Ascending aorta (tissue), 2 donors: ENCODE measurements at regions of chr17 and their contacts with region 1.

Region 1: DNA sequence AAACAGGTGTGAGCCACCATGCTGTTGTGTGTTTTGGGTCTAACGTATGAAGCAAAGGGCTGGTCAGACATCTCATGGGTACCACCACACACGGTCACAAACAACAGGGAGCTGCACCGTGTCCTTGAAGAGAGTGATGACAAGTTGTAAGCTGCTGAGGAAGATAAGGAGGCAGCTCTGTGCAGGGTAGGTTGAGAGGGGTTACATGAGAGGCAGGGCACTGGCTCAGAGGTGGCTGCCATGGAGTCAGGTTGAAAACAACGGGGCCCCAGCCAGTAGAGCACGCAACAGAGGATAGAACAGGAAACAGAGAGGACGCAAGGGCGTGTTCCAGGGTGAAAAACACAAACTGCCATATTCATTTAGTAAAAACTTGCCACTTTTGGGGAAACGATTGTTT is 52.2 kb downstream of the TRARG1 start:
- DNase-seq: no peak
- H3K4me3 ChIP-seq: no peak overlapping the region
- H3K27ac ChIP-seq: no peak overlapping the region
- H3K4me1 ChIP-seq: no peaks in the 10 kb centered on the region
- H3K27me3 ChIP-seq: no peaks in the 10 kb centered on the region
- CTCF ChIP-seq: no peak

Region 2: GRCh38 chr17:1229432-1229899 is 102.2 kb before region 1 on chr17:
- intact Hi-C with region 1: no loop called
- DNase-seq: peak; percentile 39 to 83
- H3K4me3 ChIP-seq: peak overlapping the region; percentile 72 to 88
- H3K27ac ChIP-seq: peak overlapping the region in 1 of 2 donors; percentile 39
- H3K4me1 ChIP-seq: peaks cover 4 to 7% of the 10 kb centered on the region in 2 donors
- H3K27me3 ChIP-seq: peaks cover 18% of the 10 kb centered on the region
- CTCF ChIP-seq: no peak

Region 3: DNA sequence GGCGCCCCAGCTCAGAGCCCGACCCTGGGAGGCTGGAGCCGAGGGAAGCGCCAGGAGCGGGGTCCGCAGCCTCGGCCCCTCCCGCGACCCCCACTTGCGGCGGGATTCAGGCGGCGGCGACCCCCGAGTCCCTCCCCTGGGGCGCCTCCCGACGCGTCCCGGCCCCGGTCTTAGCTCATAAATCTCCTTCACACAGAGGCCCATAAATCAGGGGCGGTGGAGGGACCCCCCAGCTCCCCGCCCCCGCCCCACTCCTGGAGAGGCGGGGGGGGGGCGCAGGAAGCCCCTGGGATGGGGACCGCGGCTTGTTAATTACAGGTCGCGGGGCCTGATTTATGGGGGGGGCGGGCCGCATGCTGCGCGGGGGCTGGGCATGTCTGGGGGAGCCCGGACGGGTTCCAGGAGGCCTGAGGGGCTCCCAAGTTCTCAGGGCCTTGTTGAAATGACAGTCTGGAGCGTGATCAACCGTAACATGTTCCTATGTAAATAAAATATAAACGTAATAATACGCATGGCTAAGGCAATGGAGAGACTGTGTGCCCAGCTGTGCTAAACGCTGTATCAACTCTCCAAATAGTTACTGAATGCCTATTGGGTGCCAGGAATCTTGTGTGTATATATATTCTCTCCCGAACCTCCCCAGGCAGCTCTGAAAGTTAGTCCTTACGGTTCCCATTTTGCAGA is 71.5 kb before region 1 on chr17:
- intact Hi-C with region 1: loop called (anchors 1 kb)
- DNase-seq: no peak
- H3K4me3 ChIP-seq: peak overlapping the region; percentile 53 to 69
- H3K27ac ChIP-seq: no peak overlapping the region
- H3K4me1 ChIP-seq: peaks cover 4 to 6% of the 10 kb centered on the region in 2 donors
- H3K27me3 ChIP-seq: no peaks in the 10 kb centered on the region
- CTCF ChIP-seq: no peak

Region 4: GRCh38 chr17:1590031-1590748 is 258.5 kb after region 1 on chr17:
- intact Hi-C with region 1: no loop called
- DNase-seq: peak in 1 of 2 donors; percentile 92
- H3K4me3 ChIP-seq: peak overlapping the region; percentile 8 to 38
- H3K27ac ChIP-seq: peak overlapping the region; percentile 84 to 85
- H3K4me1 ChIP-seq: peaks cover 12 to 40% of the 10 kb centered on the region in 2 donors
- H3K27me3 ChIP-seq: no peaks in the 10 kb centered on the region
- CTCF ChIP-seq: no peak